A549 (cell line): ENCODE measurements at regions of chr19 and their contacts with region 1.

Region 1: GRCh38 chr19:37906869-37907734 is at the start of gene SIPA1L3:
- DNase-seq: peak; percentile 99
- ATAC-seq: peak; percentile 91 to 97
- H3K4me3 ChIP-seq: peak within 1 kb of the TSS; percentile 69
- H3K27ac ChIP-seq: peak within 1 kb of the TSS; percentile 83 to 87
- H3K4me1 ChIP-seq: peaks cover 30% of the 10 kb centered on the region
- CTCF ChIP-seq: no peak; the same call in 2 of the 3 replicates
- EP300 ChIP-seq: no peak; a peak in 1 of 5 replicates
- POLR2A ChIP-seq: peak; percentile 74
- RAD21 ChIP-seq: peak; percentile 16 to 45
- polyA plus RNA-seq, gene SIPA1L3: 28.9 and 47.8 TPM in 2 replicates

Region 2: GRCh38 chr19:37691881-37692504 is 215.1 kb before region 1 on chr19:
- CTCF ChIA-PET with region 1: no interaction called
- POLR2A ChIA-PET with region 1: no interaction called
- DNase-seq: no peak
- ATAC-seq: no peak
- H3K4me3 ChIP-seq: no peak overlapping the region
- H3K27ac ChIP-seq: no peak overlapping the region
- H3K4me1 ChIP-seq: no peaks in the 10 kb centered on the region
- CTCF ChIP-seq: no peak
- EP300 ChIP-seq: no peak
- POLR2A ChIP-seq: no peak
- RAD21 ChIP-seq: no peak

Region 3: GRCh38 chr19:37790244-37790925 is 116.7 kb before region 1 on chr19:
- CTCF ChIA-PET with region 1: no interaction called
- POLR2A ChIA-PET with region 1: no interaction called
- DNase-seq: no peak
- ATAC-seq: no peak; a peak in 1 of 6 replicates
- H3K4me3 ChIP-seq: no peak overlapping the region
- H3K27ac ChIP-seq: no peak overlapping the region
- H3K4me1 ChIP-seq: no peaks in the 10 kb centered on the region
- CTCF ChIP-seq: no peak
- EP300 ChIP-seq: no peak
- POLR2A ChIP-seq: no peak
- RAD21 ChIP-seq: no peak

Region 4: DNA sequence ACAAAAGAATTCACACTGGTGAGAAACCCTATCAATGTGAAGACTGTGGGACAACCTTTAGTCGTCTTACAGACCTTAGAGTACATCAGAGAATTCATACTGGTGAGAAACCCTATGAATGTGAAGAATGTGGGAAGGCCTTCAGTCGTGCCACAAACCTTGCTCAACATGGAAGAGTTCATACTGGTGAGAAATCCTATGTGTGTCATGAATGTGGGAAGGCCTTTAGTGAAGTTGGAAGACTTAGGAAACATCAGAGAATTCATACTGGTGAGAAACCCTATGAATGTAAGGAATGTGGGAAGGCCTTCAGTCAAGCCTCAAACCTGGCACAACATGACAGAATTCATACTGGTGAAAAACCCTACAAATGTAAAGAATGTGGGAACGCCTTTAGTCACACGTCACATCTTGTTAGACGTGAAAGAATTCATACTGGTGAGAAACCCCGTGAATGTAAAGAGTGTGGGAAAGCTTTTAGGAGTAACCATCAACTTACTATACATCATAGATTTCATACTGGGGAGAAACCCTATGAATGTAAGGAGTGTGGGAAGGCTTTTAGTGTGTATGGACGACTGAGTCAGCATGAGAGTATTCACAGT is 103.8 kb before region 1 on chr19:
- CTCF ChIA-PET with region 1: no interaction called
- POLR2A ChIA-PET with region 1: no interaction called
- DNase-seq: peak in 1 of 2 experiments; percentile 24
- ATAC-seq: no peak
- H3K4me3 ChIP-seq: no peak overlapping the region
- H3K27ac ChIP-seq: no peak overlapping the region
- H3K4me1 ChIP-seq: no peaks in the 10 kb centered on the region
- CTCF ChIP-seq: no peak
- EP300 ChIP-seq: no peak
- POLR2A ChIP-seq: no peak
- RAD21 ChIP-seq: no peak

Region 5: DNA sequence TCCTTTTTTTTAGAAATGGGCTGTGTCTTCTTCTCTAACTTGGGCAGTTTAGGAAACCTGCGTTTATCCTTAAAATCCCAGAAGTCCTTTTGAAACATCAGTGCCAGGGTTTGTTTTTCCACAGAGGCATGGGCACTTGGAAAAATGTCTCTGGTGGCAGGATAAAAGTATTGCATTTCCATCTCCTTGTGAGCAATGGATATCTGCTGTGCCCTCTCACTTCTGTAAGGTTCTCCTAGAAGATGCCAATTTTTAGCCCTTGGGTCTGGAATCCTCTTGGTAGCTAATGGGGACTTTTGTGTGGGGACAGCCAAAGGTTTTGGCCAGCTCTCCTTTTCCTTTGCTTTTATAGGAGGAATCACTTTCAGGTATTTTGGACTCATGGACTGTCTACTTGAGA is 21.7 kb before region 1 on chr19:
- CTCF ChIA-PET with region 1: interaction called, 15 read pairs
- POLR2A ChIA-PET with region 1: interaction called, 3 read pairs
- DNase-seq: peak; percentile 38 to 43
- ATAC-seq: peak; percentile 76; a peak in 5 of 6 replicates
- H3K4me3 ChIP-seq: no peak overlapping the region
- H3K27ac ChIP-seq: no peak overlapping the region
- H3K4me1 ChIP-seq: no peaks in the 10 kb centered on the region
- CTCF ChIP-seq: no peak
- EP300 ChIP-seq: no peak
- POLR2A ChIP-seq: no peak
- RAD21 ChIP-seq: no peak

Region 6: DNA sequence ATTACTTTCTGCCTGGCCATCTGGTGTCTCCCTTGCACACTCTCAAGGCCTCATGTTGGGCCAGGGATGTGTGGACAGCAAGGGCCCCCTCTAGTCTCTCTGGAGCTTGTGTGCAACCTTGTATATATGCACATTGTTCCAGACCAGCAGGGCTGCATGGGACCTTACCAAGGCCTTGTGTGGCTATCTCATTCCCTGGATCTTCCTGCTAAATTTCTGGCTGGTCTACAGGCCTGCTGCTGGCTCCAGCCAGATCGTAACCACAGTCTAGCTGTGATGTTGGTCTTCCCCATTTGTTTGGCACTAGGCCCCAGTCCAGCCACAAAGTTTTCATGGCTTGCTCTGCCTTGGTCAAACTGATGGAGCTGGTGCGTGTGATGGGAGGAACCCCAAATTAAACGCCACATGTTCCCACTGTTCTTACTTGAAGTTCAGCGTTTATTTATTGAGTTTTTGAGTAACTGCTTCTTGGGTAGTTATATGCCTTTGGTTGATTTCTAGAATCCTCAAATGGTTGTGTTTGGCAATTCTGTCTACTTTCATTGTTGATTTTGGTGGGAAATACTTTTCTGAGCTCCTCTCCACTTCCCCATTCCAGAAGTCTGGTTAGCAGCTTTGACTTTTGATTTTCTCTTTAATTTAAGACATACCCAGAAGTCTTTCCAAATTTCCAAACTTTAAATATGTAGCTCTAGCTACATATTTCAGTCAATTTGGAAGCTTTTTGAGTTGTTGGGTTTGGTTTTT is 56.3 kb after region 1 on chr19:
- CTCF ChIA-PET with region 1: interaction called, 15 read pairs
- POLR2A ChIA-PET with region 1: no interaction called
- DNase-seq: no peak
- ATAC-seq: peak; percentile 39 to 62; a peak in 4 of 6 replicates
- H3K4me3 ChIP-seq: no peak overlapping the region
- H3K27ac ChIP-seq: peak overlapping the region in 1 of 2 experiments; percentile 36; a peak in 2 of 6 replicates
- H3K4me1 ChIP-seq: peaks cover 27% of the 10 kb centered on the region
- CTCF ChIP-seq: no peak
- EP300 ChIP-seq: no peak
- POLR2A ChIP-seq: no peak
- RAD21 ChIP-seq: no peak

Region 7: GRCh38 chr19:38057959-38058710 is 151.0 kb after region 1 on chr19:
- CTCF ChIA-PET with region 1: interaction called, 316 read pairs
- POLR2A ChIA-PET with region 1: no interaction called
- DNase-seq: peak; percentile 54 to 60
- ATAC-seq: peak; percentile 27 to 70; a peak in 3 of 6 replicates
- H3K4me3 ChIP-seq: no peak overlapping the region
- H3K27ac ChIP-seq: peak overlapping the region; percentile 53 to 73; a peak in 5 of 6 replicates
- H3K4me1 ChIP-seq: peaks cover 31% of the 10 kb centered on the region
- CTCF ChIP-seq: no peak
- EP300 ChIP-seq: no peak
- POLR2A ChIP-seq: no peak
- RAD21 ChIP-seq: no peak

Region 8: GRCh38 chr19:38134540-38135149 is 227.5 kb after region 1 on chr19:
- CTCF ChIA-PET with region 1: interaction called, 133 read pairs
- POLR2A ChIA-PET with region 1: no interaction called
- DNase-seq: peak; percentile 74 to 81
- ATAC-seq: peak; percentile 54 to 63
- H3K4me3 ChIP-seq: no peak overlapping the region
- H3K27ac ChIP-seq: no peak overlapping the region
- H3K4me1 ChIP-seq: 0 out of 3 replicates have a peak, but pooled peaks cover 6% of the 10 kb centered on the region
- CTCF ChIP-seq: peak; percentile 83
- EP300 ChIP-seq: no peak
- POLR2A ChIP-seq: no peak
- RAD21 ChIP-seq: peak in 1 of 2 experiments; percentile 44; a peak in 4 of 5 replicates

Region 9: DNA sequence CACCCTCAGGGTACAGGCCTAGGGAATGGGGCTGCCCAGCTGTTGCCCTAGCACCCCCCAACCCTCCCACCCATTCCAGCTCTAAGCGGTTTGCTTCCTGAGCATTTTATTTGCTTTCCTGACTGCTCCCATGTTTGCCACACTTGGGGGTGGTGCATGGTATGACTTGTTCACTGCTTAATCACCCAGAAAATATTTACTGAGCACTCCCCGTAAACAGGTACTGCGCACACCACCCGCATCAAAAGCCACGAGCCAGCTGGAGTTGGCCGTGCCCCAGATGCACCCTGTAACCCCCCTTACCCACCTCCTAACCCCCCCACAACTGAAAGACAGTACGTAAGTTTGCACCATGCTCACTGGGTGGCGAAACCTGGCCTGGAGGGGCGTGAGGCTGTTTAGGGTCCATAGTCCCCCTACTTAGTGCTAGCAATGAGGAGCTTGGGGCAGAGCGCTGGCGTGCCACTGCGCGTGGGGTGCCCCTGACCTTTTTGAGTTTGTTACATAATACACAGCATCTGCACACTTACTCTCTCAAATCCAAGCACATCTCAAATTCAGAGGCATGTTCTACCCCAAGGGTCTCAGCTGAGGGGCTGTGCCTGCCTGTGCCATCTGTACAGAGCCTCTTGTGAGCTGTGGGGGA is 287.1 kb after region 1 on chr19:
- CTCF ChIA-PET with region 1: interaction called, 26 read pairs
- POLR2A ChIA-PET with region 1: no interaction called
- DNase-seq: peak in 1 of 2 experiments; percentile 78
- ATAC-seq: peak; percentile 42 to 59
- H3K4me3 ChIP-seq: 0 out of 3 replicates have a peak overlapping the region, but pooled peaks have one; percentile 4
- H3K27ac ChIP-seq: peak overlapping the region; percentile 52 to 70; a peak in 5 of 6 replicates
- H3K4me1 ChIP-seq: peaks cover 28% of the 10 kb centered on the region
- CTCF ChIP-seq: no peak
- EP300 ChIP-seq: no peak
- POLR2A ChIP-seq: no peak
- RAD21 ChIP-seq: no peak

Region 10: GRCh38 chr19:38250821-38251563 is 343.9 kb after region 1 on chr19:
- CTCF ChIA-PET with region 1: interaction called, 38 read pairs
- POLR2A ChIA-PET with region 1: interaction called, 3 read pairs
- DNase-seq: no peak
- ATAC-seq: no peak
- H3K4me3 ChIP-seq: no peak overlapping the region
- H3K27ac ChIP-seq: peak overlapping the region in 1 of 2 experiments; percentile 39; a peak in 3 of 6 replicates
- H3K4me1 ChIP-seq: peaks cover 34% of the 10 kb centered on the region
- CTCF ChIP-seq: no peak
- EP300 ChIP-seq: no peak
- POLR2A ChIP-seq: no peak
- RAD21 ChIP-seq: no peak